AG04449 (cell line): ENCODE measurements at regions of chr1 and their contacts with region 1.

Region 1: DNA sequence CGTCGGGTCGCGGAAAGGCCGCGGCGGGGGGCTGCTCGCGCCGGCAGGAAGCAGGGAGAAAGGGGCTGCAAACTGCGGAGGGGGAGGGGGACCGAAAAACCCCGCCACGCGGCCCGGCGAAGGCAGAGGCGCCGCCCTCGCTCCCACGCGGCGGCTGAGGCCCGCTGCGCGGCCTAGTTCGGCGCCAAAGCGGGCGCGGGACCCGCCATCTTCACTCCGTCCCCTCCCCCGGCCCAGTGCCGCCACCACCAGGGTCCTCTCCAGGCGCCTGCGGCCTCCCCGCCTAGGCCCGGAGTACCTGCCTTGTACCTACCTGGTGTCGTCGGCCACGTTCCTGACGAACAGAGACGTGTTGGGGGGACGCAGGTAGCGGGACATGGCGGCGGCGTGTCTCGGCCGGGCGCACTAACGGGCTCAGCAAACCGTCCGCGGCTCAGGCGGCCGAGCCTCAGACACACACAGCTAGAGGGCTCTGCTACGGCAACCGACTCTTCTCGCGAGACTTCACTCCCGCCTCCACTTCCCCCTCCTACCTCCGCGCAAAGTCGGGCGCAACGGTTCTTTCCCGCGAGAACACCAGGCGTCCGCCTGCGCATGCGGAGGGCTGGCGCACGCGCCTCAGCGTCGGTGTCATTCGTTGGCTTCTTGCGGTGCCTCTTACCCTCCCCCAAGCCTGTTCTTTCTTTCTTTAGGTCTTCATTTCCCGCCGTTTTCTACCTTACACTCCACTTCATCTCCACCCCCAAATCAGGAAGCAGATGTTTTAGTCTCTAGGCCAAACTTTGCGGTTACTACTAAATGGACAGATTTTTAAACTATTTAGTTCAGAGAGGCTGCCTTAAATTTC is at the start of gene SRSF10:
- DNase-seq: peak; percentile 88
- H3K4me3 ChIP-seq: peak within 1 kb of the TSS; percentile 99
- CTCF ChIP-seq: peak; percentile 41

Region 2: GRCh38 chr1:23964790-23965740 is 15.0 kb before region 1 on chr1:
- CTCF ChIA-PET with region 1: interaction called, 16 read pairs
- POLR2A ChIA-PET with region 1: interaction called, 5 read pairs
- DNase-seq: no peak
- H3K4me3 ChIP-seq: no peak overlapping the region
- CTCF ChIP-seq: no peak

Region 3: DNA sequence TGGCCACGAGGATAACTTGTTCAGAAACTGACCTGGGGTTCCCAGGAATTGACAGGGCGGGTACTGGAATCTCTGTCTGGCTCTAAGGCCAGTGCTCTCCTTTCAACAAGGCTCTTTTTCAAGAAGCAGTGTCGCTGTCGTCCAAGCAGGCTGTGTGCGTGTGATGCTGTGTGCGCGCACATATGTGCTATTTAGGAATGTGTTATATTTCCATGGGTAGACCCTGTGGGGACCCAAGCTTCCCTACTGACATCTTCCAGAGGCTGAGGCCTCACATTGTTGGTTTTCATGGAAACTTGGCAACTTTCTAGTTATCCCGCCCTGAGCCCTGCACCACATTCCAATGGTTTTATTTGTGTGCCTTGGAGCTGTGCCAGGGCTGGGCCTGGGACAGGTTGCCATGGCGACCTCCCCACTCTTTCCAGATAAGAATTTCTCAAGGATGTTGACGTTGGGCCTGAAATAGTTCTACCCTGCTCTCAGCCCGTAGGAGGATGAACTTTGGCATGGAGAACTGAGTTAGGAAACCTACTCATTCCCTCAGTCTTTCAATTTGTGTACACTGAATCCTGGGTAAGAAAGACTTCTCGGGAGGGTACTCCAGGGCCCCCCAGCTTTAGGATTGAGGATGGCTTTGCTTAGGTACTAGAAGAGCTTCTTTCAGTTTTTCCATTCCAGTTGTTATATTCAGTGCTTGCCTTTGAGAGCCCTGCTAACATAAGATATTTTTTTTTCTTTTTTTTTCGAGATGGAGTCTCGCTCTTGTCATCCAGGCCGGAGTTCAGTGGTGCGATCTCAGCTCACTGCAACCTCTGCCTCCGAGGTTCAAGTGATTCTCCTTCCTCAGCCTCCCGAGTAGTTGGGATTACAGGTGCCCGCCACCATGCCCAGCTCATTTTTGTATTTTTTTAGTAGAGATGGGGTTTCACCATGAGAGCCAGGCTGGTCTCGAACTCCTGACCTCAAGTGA is 38.8 kb after region 1 on chr1:
- CTCF ChIA-PET with region 1: interaction called, 12 read pairs
- POLR2A ChIA-PET with region 1: interaction called, 3 read pairs
- DNase-seq: peak; percentile 98
- H3K4me3 ChIP-seq: no peak overlapping the region
- CTCF ChIP-seq: no peak